ENCODE measurements at regions of chr10 and their contacts with region 1.

Region 1: GRCh38 chr10:27446091-27446918 is 57.8 kb upstream of the RAB18 start:
- DNase-seq: no peak
- ATAC-seq: no peak
- H3K4me3 Mint-ChIP-seq: no peak overlapping the region
- H3K27ac Mint-ChIP-seq: no peak overlapping the region
- H3K4me1 Mint-ChIP-seq: peaks cover 6% of the 10 kb centered on the region
- H3K27me3 Mint-ChIP-seq: no peaks in the 10 kb centered on the region
- CTCF ChIP-seq: peak; percentile 50

Region 2: DNA sequence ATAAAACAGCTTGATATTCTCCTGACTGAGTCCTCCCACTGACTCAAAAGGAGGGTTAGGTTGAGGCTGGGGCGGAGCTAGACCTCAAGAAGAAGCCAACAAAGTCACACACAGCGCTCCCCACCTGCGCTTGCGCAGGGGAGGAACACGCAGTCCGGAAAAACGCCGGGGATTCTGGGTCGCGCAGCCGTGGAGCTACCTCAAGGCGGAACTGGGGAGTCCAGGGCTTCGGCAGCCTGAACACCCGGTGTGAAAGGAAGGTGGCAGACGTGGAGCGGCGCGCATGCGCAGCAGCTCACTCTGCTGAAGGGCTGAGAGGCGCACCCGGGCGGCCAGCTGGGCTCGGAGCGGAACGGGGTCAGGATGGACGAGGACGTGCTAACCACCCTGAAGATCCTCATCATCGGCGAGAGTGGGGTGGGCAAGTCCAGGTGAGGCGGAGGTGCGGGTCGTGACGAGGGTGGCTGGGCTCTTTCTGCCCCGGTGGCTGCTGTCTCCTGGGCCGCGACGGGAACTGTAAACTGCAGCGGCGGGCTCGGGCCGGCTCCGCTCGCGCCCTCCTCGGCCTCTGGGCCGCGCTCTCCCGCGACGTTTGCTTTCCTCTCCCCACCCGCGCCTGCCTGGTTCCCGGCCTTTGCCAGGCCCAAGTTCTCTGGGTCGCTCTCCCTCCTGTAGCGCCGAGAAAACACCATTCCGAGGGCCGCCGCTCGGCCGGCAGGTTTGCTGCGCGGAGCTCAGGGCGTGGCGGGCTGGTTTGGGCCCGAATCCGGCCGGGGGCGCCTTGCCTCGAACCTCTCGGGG is 57.9 kb after region 1 on chr10 and contains the start of gene RAB18:
- CTCF ChIA-PET with region 1: interaction called, 12 read pairs
- POLR2A ChIA-PET with region 1: no interaction called
- intact Hi-C with region 1: no loop called
- DNase-seq: peak; percentile 98
- ATAC-seq: peak; percentile 98
- H3K4me3 Mint-ChIP-seq: peak within 1 kb of the TSS; percentile 99
- H3K27ac Mint-ChIP-seq: peak within 1 kb of the TSS; percentile 94
- H3K4me1 Mint-ChIP-seq: peaks cover 46% of the 10 kb centered on the region
- H3K27me3 Mint-ChIP-seq: no peaks in the 10 kb centered on the region
- CTCF ChIP-seq: no peak
- total RNA-seq, gene RAB18: 42.0 to 47.2 TPM